ENCODE measurements at regions of chr16 and their contacts with region 1.

Region 1: GRCh38 chr16:381789-382717 is at the start of gene PGAP6:
- DNase-seq: peak; percentile 72
- H3K4me3 ChIP-seq: peak within 1 kb of the TSS; percentile 93
- H3K27ac ChIP-seq: peak within 1 kb of the TSS; percentile 63
- H3K4me1 ChIP-seq: no peaks in the 10 kb centered on the region
- H3K27me3 ChIP-seq: no peaks in the 10 kb centered on the region
- CTCF ChIP-seq: no peak
- total RNA-seq, gene PGAP6: 38.7 and 47.1 TPM in 2 replicates

Region 2: DNA sequence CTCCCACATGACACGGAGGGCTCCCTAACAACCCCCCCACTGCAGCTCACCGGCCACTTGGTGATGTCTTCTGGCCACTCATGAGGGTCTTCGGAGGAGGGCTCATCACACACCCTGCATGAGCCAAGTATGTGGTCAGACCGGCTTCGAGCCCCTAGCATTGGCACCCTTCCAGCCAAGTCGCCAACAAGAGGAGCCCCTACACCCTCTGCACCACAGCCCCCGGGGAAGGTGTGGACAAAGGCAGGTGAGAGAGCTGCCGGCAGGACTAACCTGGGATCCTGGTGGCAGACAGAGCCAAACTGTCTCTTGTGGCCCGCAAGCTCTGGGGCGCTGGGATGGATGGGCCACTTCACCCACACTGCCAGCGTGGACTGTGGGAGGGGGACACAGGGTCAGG is 321.9 kb before region 1 on chr16:
- CTCF ChIA-PET with region 1: no interaction called
- POLR2A ChIA-PET with region 1: interaction called, 16 read pairs
- intact Hi-C with region 1: no loop called
- DNase-seq: no peak
- H3K4me3 ChIP-seq: no peak overlapping the region
- H3K27ac ChIP-seq: no peak overlapping the region
- H3K4me1 ChIP-seq: no peaks in the 10 kb centered on the region
- H3K27me3 ChIP-seq: no peaks in the 10 kb centered on the region
- CTCF ChIP-seq: no peak

Region 3: DNA sequence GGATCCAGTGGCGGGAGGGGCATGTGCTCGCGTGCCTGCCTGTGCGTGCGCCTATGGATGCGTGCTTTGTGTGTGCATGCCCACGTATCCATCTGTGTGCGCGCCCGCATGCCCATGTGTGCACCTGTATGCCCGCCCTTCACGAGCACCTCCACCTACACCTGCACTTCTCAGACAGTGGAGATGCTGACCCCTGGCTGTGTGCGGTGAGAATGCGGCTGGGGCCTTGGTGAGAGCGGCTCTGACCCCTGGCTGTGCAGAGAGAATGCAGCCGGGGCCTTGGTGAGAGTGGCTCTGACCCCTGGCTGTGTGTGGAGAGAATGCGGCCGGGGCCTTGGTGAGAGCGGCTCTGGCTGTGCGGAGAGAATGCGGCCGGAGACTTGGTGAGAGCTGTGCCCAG is 63.4 kb before region 1 on chr16:
- CTCF ChIA-PET with region 1: no interaction called
- POLR2A ChIA-PET with region 1: no interaction called
- intact Hi-C with region 1: no loop called
- DNase-seq: no peak
- H3K4me3 ChIP-seq: no peak overlapping the region
- H3K27ac ChIP-seq: no peak overlapping the region
- H3K4me1 ChIP-seq: no peaks in the 10 kb centered on the region
- H3K27me3 ChIP-seq: no peaks in the 10 kb centered on the region
- CTCF ChIP-seq: no peak

Region 4: DNA sequence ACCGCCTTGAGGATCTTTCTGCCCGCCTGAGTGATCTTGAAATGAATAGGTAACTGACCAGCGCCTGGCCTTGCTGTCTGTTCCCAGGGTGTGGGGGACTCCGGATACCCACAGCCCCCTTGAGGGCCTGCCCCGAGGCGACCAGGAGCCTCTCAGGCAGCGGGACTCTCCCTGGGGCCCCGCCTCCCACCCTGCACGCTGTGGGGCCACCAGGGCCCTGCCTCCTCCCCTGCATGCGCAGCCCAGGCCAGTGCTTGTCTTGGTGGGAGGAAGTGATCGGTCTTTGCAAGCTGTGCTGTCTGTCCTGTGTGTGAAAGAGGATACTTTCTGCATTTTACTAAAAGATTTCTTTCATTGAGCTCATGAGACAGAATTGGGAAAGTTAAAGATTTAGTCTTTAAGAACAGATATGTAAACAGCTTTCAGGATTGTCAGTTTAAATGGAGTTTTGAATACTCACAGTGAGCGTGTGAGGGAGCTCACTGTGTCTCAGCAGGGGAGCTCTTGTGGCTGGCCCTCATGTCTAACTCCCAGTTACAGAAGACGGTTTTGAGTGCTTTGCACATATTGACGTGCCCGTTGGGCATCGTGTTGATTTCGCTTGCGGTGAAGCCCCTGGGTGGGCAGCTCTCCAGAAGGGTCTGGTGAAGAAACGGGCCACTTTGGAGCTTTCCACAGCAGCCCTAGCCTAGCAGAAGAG is 109.3 kb after region 1 on chr16:
- CTCF ChIA-PET with region 1: interaction called, 11 read pairs
- POLR2A ChIA-PET with region 1: interaction called, 5 read pairs
- intact Hi-C with region 1: no loop called
- DNase-seq: no peak
- H3K4me3 ChIP-seq: no peak overlapping the region
- H3K27ac ChIP-seq: no peak overlapping the region
- H3K4me1 ChIP-seq: no peaks in the 10 kb centered on the region
- H3K27me3 ChIP-seq: no peaks in the 10 kb centered on the region
- CTCF ChIP-seq: no peak

Region 5: DNA sequence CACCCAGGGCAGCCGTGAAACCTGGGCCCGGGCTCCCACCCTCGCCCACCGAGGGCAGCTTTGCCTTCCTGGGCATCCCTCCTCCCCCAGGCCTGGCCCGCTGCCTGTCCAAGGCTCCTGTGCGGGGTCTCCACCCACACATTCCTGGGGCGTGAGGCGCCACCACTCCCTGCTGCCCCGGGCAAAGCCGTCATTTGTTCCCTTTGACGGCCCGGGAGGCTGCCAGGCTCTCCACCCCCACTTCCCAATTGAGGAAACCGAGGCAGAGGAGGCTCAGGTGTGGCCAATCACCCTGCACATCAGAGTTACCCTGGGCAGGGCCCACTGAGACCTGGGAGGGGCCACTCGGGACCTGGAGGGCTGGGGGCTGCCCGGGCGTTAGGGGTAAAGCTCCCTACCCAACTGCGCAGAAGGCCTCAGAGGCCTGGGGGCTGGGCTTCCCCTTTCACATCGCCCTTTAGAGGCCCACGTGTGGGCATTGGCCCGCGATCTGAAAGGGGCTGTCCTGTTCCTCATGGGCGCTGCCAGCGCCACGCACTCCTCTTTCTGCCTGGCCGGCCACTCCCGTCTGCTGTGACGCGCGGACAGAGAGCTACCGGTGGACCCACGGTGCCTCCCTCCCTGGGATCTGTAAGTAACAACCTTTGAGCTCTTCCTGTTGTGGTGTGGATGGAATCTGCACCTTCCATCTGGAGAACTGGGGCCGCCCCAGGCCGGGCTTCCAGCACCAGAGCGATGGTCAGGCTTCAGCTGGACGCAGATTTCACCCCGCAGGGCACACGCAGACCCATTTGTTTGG is 378.7 kb after region 1 on chr16 and contains the start of gene MSLN:
- CTCF ChIA-PET with region 1: no interaction called
- POLR2A ChIA-PET with region 1: no interaction called
- intact Hi-C with region 1: no loop called
- DNase-seq: no peak
- H3K4me3 ChIP-seq: no peak within 1 kb of the TSS
- H3K27ac ChIP-seq: no peak within 1 kb of the TSS
- H3K4me1 ChIP-seq: no peaks in the 10 kb centered on the region
- H3K27me3 ChIP-seq: no peaks in the 10 kb centered on the region
- CTCF ChIP-seq: no peak
- total RNA-seq, gene MSLN: not detected in 2 replicates

Region 6: GRCh38 chr16:788394-789126 is 406.5 kb after region 1 on chr16 and contains the start of gene CHTF18:
- CTCF ChIA-PET with region 1: no interaction called
- POLR2A ChIA-PET with region 1: interaction called, 12 read pairs
- intact Hi-C with region 1: no loop called
- DNase-seq: peak; percentile 95
- H3K4me3 ChIP-seq: peak within 1 kb of the TSS; percentile 72
- H3K27ac ChIP-seq: peak within 1 kb of the TSS; percentile 83
- H3K4me1 ChIP-seq: peaks cover 8% of the 10 kb centered on the region
- H3K27me3 ChIP-seq: peaks cover under 1% of the 10 kb centered on the region
- CTCF ChIP-seq: no peak
- total RNA-seq, gene CHTF18: 124 and 125 TPM in 2 replicates

Measured in A673 (cell line).